MCF 10A (cell line): ENCODE measurements at regions of chr17 and their contacts with region 1.

Region 1: GRCh38 chr17:45197555-45198334 is 23.9 kb upstream of the FMNL1 start:
- DNase-seq: peak; percentile 91
- H3K4me3 Mint-ChIP-seq: no peak overlapping the region
- H3K27ac Mint-ChIP-seq: peak overlapping the region; percentile 19
- H3K4me1 Mint-ChIP-seq: peaks cover 10% of the 10 kb centered on the region
- H3K27me3 Mint-ChIP-seq: no peaks in the 10 kb centered on the region
- CTCF ChIP-seq: peak; percentile 99

Region 2: GRCh38 chr17:44556832-44557606 is 640.7 kb before region 1 on chr17 and contains the start of gene FZD2:
- CTCF ChIA-PET with region 1: no interaction called
- POLR2A ChIA-PET with region 1: no interaction called
- intact Hi-C with region 1: no loop called
- DNase-seq: peak; percentile 98
- H3K4me3 Mint-ChIP-seq: peak within 1 kb of the TSS; percentile 95
- H3K27ac Mint-ChIP-seq: peak within 1 kb of the TSS; percentile 100
- H3K4me1 Mint-ChIP-seq: peaks cover 30% of the 10 kb centered on the region
- H3K27me3 Mint-ChIP-seq: no peaks in the 10 kb centered on the region
- CTCF ChIP-seq: no peak
- total RNA-seq, gene FZD2: 6.8 and 10.1 TPM in 2 replicates

Region 3: GRCh38 chr17:45021607-45022287 is 176.0 kb before region 1 on chr17:
- CTCF ChIA-PET with region 1: no interaction called
- POLR2A ChIA-PET with region 1: no interaction called
- intact Hi-C with region 1: no loop called
- DNase-seq: peak; percentile 56
- H3K4me3 Mint-ChIP-seq: no peak overlapping the region
- H3K27ac Mint-ChIP-seq: no peak overlapping the region
- H3K4me1 Mint-ChIP-seq: peaks cover 18% of the 10 kb centered on the region
- H3K27me3 Mint-ChIP-seq: no peaks in the 10 kb centered on the region
- CTCF ChIP-seq: peak; percentile 80

Region 4: DNA sequence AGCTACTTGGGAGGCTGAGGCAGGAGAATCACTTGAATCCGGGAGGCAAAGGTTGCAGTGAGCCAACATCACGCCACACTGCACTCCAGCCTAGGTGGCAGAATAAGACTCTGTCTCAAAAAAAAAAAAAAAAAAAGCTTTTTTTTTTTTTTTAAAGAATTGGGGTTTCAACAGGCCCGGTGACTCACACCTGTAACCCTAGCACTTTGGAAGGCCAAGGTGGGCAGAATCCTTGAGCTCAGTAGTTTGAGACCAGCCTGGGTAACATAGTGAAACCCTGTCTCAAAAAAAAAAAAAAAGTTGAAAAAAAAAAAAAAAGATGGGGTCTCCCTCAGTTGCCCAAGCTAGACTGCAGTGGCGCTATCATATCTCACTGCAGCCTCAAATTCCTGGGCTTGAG is 42.7 kb before region 1 on chr17:
- CTCF ChIA-PET with region 1: interaction called, 200 read pairs
- POLR2A ChIA-PET with region 1: interaction called, 396 read pairs
- intact Hi-C with region 1: no loop called
- DNase-seq: peak; percentile 61
- H3K4me3 Mint-ChIP-seq: no peak overlapping the region
- H3K27ac Mint-ChIP-seq: no peak overlapping the region
- H3K4me1 Mint-ChIP-seq: peaks cover 15% of the 10 kb centered on the region
- H3K27me3 Mint-ChIP-seq: no peaks in the 10 kb centered on the region
- CTCF ChIP-seq: no peak

Region 5: DNA sequence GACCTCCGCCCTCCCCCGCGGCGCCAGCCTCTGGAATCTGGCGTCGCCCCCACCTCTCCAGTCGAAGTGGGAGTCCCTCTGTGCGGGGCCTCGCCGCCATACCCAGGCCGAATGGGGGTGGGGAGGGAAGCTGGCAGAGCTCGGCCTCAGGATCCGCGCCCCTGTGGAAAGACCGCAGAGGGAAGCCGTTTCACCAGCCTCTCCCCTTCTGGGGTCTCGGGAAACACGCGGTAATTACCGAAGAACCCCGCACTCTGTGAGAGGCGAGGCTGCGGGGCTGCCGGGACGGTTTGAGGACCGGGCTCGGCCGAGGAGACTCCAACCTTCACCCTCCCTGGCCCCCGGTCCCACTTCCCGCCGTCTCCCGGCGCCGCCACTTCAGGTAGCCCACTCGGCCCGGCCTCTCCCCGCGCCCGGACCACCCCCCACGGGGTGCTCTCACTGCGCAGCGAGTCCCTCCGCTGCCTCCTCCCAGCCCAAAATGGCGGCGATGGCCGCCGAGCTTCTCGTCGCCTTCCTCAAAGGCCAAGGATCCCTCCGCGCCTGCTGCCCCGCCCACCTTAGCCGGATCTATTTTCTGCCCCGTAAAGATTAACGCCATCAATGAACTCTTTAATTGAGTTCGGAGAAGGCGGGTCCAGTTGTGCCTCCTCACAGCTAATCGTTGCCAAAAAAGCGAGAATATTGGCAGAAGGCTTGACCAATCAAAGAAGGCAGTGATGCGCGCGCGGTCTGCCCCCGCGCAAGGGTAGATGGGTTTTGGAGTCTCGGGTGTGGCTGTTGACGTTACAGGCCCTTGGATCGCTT is 36.5 kb before region 1 on chr17:
- CTCF ChIA-PET with region 1: interaction called, 38 read pairs
- POLR2A ChIA-PET with region 1: interaction called, 54 read pairs
- intact Hi-C with region 1: no loop called
- DNase-seq: peak; percentile 100
- H3K4me3 Mint-ChIP-seq: peak overlapping the region; percentile 98
- H3K27ac Mint-ChIP-seq: peak overlapping the region; percentile 99
- H3K4me1 Mint-ChIP-seq: peaks cover 18% of the 10 kb centered on the region
- H3K27me3 Mint-ChIP-seq: no peaks in the 10 kb centered on the region
- CTCF ChIP-seq: no peak

Region 6: DNA sequence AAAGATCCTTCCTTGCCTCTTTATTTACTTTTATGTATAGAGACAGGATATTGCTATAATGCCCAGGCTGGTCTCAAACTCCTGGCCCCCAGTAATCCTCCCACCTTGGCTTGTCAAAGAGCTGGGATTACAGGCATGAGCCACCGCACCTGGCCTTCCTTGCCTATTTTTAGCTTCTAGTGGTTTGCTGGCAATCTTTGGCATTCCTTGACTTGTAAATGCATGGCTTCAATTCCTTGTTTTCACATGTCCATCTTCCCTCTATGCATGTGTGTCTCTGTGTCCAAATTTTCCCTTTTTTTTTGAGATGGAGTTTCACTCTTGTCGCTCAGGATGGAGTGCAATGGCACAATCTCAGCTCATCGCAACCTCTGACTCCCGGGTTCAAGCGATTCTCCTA is 13.6 kb before region 1 on chr17:
- CTCF ChIA-PET with region 1: interaction called, 28 read pairs
- POLR2A ChIA-PET with region 1: interaction called, 8 read pairs
- intact Hi-C with region 1: no loop called
- DNase-seq: no peak
- H3K4me3 Mint-ChIP-seq: no peak overlapping the region
- H3K27ac Mint-ChIP-seq: no peak overlapping the region
- H3K4me1 Mint-ChIP-seq: peaks cover 10% of the 10 kb centered on the region
- H3K27me3 Mint-ChIP-seq: no peaks in the 10 kb centered on the region
- CTCF ChIP-seq: no peak